Activated naive CD4-positive, alpha-beta T cell treated with anti-CD3 and anti-CD28 coated beads for 36 hours (primary cell): ENCODE measurements at regions of chr2 and their contacts with region 1.

Region 1: DNA sequence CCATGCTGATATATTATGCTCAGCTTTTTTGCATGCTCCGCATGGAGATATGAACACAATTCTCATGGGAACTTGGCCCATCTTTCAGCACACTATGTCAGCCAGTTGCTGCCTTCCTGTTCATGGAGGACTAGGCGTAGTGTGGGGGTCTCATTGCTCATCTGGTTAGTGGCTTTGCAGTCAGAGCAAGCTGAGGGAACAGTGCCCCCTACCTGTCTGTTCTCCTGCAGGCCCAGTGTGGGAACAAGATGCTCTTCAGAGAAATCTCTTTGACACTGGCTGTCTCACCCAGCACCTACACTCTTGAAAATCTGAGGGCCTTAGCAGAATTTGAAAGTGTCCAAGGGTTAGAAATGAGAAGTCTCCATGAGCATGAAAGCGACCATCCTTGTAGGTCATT is 47.1 kb downstream of the SPTBN1 start:
- DNase-seq: peak; percentile 64
- H3K4me3 Mint-ChIP-seq: no peak overlapping the region
- H3K27ac Mint-ChIP-seq: no peak overlapping the region
- H3K4me1 Mint-ChIP-seq: no peaks in the 10 kb centered on the region
- H3K27me3 Mint-ChIP-seq: no peaks in the 10 kb centered on the region

Region 2: DNA sequence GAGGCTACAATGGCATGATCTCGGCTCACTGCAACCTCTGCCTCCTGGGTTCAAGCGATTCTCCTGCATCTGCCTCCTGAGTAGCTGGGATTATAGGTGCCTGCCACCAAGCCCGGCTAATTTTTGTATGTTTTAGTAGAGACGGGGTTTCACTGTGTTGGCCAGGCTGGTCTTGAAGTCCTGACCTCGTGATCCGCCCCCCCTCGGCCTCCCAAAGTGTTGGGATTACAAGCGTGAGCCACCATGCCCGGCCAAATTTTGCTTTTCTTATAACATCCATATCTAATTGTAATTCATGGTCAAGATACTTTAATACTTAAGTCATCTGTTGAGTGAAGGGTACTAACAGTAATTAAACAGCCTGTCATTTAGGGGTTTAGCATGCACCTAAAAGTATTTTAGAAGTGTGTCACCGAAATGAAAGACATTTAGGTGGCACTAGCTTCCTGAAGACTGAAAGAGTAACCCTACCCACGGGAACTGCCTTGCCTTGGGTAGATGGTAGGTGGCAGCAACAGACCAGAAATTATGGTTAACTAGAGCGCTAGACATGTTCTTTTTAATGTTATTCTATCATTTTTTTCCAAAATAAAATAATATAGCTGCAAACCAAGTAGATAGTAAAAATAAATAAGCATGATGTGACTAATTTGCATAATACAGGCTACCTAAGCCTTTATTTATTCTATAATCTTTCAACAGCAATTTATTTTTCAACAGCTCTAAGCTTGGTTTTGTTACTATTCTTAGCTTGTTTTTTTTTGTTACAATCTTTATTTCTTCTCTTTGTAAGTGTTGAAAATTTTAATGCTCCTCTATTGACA is 396.3 kb before region 1 on chr2:
- CTCF ChIA-PET with region 1: interaction called, 18 read pairs
- intact Hi-C with region 1: loop called (anchors 1 kb)
- DNase-seq: peak; percentile 71
- H3K4me3 Mint-ChIP-seq: no peak overlapping the region
- H3K27ac Mint-ChIP-seq: no peak overlapping the region
- H3K4me1 Mint-ChIP-seq: peaks cover 7% of the 10 kb centered on the region
- H3K27me3 Mint-ChIP-seq: no peaks in the 10 kb centered on the region

Region 3: DNA sequence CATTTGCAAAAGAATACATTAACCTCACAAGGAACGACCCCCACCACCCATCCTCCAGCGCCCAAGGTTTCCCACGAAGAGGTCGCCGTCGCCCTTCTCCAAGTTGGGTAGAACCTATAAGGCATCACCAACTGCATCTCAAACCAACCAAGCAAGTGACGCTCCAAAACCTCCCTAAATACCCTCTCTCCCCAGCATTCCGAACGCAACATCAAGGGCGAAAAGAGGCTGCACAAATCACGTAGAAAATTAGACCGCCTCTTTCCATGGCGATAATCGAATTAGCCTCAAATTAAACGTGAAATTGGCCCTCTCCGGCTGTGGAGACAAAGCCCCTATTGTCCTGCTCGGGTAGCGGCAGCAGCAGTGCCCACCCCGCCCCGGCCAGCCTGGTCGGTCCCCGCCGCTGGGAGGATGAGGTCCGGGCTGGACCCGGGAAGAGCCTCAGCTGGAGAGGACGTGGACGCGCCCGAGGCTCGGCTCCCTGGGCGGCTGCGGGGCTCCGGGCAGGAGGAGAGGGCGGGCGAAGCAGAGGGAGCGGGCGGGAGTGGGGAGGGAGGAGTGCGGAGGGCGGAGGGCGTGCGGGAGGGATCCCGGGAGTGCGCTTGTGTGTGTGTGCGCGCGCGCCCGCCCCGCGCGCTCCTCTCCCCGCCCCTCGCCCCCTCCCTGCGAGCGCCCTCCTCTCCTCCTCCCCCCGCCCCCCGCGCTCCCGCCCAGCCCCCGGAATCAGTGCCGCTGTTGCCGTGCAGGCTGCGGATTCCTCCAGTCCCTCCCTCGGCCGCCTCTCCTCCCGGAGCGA is 47.4 kb before region 1 on chr2 and contains the start of gene SPTBN1:
- CTCF ChIA-PET with region 1: interaction called, 3 read pairs
- intact Hi-C with region 1: loop called (anchors 5 kb)
- DNase-seq: peak; percentile 34
- H3K4me3 Mint-ChIP-seq: peak within 1 kb of the TSS; percentile 77
- H3K27ac Mint-ChIP-seq: no peak within 1 kb of the TSS
- H3K4me1 Mint-ChIP-seq: peaks cover 13% of the 10 kb centered on the region
- H3K27me3 Mint-ChIP-seq: peaks cover 38% of the 10 kb centered on the region
- total RNA-seq, gene SPTBN1: 103 to 107 TPM